ENCODE measurements at regions of chr2 and their contacts with region 1.

Region 1: GRCh38 chr2:127776122-127776780 is 34.7 kb downstream of the WDR33 start:
- DNase-seq: no peak
- H3K4me3 ChIP-seq: no peak overlapping the region
- H3K27ac ChIP-seq: no peak overlapping the region
- H3K27me3 ChIP-seq: no peaks in the 10 kb centered on the region
- CTCF ChIP-seq: no peak

Region 2: GRCh38 chr2:127615501-127616166 is 160.6 kb before region 1 on chr2:
- CTCF ChIA-PET with region 1: no interaction called
- POLR2A ChIA-PET with region 1: no interaction called
- DNase-seq: no peak
- H3K4me3 ChIP-seq: no peak overlapping the region
- H3K27ac ChIP-seq: no peak overlapping the region
- H3K27me3 ChIP-seq: peaks cover 10% of the 10 kb centered on the region
- CTCF ChIP-seq: no peak

Region 3: GRCh38 chr2:127790694-127791529 is 14.7 kb after region 1 on chr2:
- CTCF ChIA-PET with region 1: interaction called, 10 read pairs
- POLR2A ChIA-PET with region 1: interaction called, 3 read pairs
- DNase-seq: no peak
- H3K4me3 ChIP-seq: no peak overlapping the region
- H3K27ac ChIP-seq: no peak overlapping the region
- H3K27me3 ChIP-seq: no peaks in the 10 kb centered on the region
- CTCF ChIP-seq: no peak

Measured in AG04450 (cell line).